Activated T-helper 1 cell treated with anti-CD3 and anti-CD28 coated beads, Interleukin-12 subunit alpha, Interleukin-12 subunit beta, Interleukin-2, Interleukin-4 antibody, amounts not matched to agents 30 ng/mL and 10 ng/mL and 1 ng/mL, durations not matched to agents 14 hours and 24 hours and 36 hours (primary cell): ENCODE measurements at regions of chr3 and their contacts with region 1.

Region 1: DNA sequence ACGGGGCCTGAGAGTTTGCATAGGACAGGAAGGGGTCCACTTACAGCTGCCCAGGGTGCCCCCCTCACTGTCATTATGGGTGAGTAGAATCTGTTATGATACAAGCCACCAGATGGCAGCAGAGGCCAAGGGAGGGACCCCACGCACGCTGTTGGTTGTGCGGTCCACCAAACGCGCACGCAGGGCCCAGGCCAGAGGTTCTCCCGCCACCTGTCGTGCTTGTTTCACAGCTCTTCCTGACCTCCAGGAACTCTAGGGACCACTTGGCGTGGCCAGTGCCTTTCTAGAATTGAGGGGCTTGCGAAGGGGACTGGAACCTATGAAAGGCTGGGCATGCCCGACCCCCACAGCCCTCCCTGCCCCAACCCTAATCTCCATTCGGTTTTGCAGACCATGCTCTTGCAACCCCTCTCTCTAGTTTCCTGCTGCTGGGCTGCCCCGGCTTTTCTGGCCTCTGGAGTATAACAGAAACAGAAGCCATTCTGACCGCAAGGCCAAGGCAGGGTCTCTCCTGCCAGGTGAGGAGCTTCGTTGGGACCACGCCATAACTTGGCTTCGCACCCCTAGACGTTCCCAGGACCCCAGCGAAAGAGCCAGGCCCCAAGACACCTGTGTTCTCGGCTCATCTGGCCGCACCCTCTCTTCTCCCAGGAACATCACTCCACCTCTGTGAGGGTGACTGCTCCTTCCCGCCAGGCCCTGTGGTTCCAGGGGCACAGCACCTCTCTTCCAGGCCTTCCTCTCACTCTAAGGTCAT is 46.0 kb downstream of the ALDH1L1 start:
- DNase-seq: peak; percentile 5
- H3K4me3 Mint-ChIP-seq: no peak overlapping the region
- H3K27ac Mint-ChIP-seq: no peak overlapping the region
- H3K4me1 Mint-ChIP-seq: no peaks in the 10 kb centered on the region
- H3K27me3 Mint-ChIP-seq: peaks cover 5% of the 10 kb centered on the region

Region 2: GRCh38 chr3:126146525-126147146 is 12.2 kb after region 1 on chr3:
- intact Hi-C with region 1: no loop called
- DNase-seq: no peak
- H3K4me3 Mint-ChIP-seq: no peak overlapping the region
- H3K27ac Mint-ChIP-seq: no peak overlapping the region
- H3K4me1 Mint-ChIP-seq: no peaks in the 10 kb centered on the region
- H3K27me3 Mint-ChIP-seq: peaks cover 6% of the 10 kb centered on the region

Region 3: DNA sequence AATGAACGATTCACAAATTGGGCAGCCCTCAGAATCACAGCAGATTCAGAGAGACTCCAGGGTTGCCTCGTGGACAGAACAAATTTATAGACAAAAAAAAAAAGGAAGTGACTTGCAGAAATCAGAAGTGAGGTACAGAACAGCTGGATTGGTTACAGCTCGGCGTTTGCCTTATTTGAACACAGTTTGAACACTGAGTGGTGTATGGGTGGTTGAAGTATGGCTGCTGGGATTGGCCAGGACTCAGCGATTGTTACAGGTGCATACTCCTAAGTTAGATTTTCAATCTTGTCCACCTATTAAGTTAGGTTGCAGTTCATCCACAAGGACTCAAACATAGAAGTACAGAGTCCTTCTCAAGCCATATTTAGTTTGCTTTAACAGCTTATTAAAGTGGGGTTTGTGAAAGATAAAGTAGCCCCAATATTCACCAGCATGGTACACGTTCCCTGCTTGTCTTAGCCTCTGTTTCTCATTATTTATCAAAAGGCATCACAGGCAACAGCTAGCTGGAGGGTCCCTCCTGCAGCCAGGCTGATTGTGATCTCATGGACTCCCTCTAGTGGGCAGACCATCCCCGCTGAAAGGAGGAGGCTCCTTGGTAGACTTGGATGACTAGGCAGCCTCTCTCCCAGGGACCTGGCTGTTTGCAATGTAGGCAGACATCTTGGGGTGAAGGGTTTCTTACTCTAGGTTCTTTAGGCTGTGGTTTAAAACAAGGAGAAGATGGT is 63.6 kb after region 1 on chr3:
- intact Hi-C with region 1: loop called (anchors 2 kb)
- DNase-seq: no peak
- H3K4me3 Mint-ChIP-seq: no peak overlapping the region
- H3K27ac Mint-ChIP-seq: no peak overlapping the region
- H3K4me1 Mint-ChIP-seq: no peaks in the 10 kb centered on the region
- H3K27me3 Mint-ChIP-seq: peaks cover 11% of the 10 kb centered on the region